PC-9 (cell line): ENCODE measurements at regions of chr1 and their contacts with region 1.

Region 1: DNA sequence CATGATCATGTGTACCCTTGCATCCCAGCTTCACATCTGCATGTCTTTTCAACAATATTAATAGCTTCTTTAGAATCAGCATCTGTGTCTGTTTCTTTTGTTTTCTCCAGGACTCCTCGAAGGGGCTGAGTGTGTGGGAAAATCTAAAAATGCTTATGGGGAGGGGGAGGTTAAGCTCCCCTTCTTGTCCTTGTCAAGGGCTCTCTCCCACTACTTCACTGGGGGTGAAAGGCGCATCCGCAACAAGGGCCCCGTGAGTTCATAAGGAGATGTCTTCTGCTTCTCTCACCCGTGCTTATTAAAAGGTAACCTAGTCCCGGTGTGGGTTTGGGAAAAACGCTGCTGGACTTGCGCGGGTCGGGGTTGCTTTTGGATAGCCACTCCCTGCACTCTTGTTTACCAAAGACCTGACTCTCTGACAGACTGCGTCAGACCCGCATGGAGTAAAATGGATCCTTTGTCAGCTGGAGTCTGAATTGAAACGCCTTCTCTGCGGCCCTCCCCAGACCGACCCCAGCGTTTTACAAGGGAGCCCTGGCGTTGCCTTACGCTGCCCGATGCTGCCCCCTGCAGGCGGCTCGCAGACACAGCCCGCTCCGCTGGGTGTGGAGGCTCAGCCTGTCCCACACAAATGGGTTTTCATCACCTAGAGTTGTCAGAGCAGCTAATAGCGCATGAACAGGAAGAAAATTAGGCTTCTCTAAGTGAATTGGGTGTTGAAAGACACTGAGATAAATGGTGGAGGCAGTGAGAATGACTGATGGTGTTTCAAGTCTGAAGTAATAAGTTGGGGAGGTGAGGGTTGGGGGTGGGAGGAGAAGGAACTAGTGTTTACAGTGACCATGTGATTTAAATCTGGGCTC is 53.8 kb downstream of the IER5 start:
- DNase-seq: peak; percentile 84 to 88
- H3K4me3 ChIP-seq: peak overlapping the region; percentile 4; the same call in 1 of the 2 replicates
- H3K27ac ChIP-seq: peak overlapping the region; percentile 92
- H3K4me1 ChIP-seq: peaks cover 59% of the 10 kb centered on the region
- H3K27me3 ChIP-seq: no peaks in the 10 kb centered on the region
- CTCF ChIP-seq: peak; percentile 97

Region 2: DNA sequence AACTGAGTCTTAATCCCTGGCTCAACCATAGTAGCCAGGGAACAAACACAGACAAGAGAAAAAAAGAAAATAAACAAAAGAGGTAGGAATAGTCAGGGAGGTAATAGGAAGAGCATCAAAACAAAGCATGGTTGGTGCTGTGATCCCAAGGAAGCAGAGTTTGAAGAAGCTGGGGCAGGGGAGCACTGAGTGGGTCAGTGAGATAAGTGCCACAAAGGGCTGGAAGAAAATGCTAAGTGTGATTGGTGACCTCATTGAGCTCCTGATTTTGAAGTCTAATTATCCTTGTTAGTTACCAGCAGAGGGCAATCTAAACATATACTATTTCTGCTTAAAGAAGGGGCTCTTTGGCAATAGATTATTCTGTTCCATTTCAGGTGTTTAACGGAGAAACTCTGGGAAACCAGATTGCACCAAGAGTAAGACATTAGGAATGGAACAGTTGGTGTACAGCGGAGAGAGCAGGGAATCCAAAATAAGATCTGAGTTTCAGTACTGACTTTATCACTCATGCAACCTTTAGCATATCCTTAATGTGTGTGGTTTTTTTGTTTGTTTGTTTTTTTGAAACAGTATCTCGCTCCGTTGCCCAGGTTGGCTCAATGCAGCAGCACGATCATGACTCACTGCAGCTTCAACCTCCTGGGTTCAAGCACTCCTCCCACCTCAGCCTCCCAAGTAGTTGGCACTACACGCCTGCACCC is 260.4 kb before region 1 on chr1:
- CTCF ChIA-PET with region 1: interaction called, 11 read pairs
- POLR2A ChIA-PET with region 1: no interaction called
- intact Hi-C with region 1: loop called (anchors 1 kb)
- DNase-seq: peak; percentile 1 to 53
- H3K4me3 ChIP-seq: no peak overlapping the region
- H3K27ac ChIP-seq: no peak overlapping the region
- H3K4me1 ChIP-seq: no peaks in the 10 kb centered on the region
- H3K27me3 ChIP-seq: no peaks in the 10 kb centered on the region
- CTCF ChIP-seq: peak; percentile 75

Region 3: GRCh38 chr1:181021811-181022434 is 120.4 kb before region 1 on chr1:
- CTCF ChIA-PET with region 1: interaction called, 5 read pairs
- POLR2A ChIA-PET with region 1: no interaction called
- intact Hi-C with region 1: loop called (anchors 1 kb)
- DNase-seq: peak; percentile 54 to 64
- H3K4me3 ChIP-seq: peak overlapping the region; percentile 63
- H3K27ac ChIP-seq: peak overlapping the region; percentile 62
- H3K4me1 ChIP-seq: peaks cover 18% of the 10 kb centered on the region
- H3K27me3 ChIP-seq: no peaks in the 10 kb centered on the region
- CTCF ChIP-seq: no peak

Region 4: DNA sequence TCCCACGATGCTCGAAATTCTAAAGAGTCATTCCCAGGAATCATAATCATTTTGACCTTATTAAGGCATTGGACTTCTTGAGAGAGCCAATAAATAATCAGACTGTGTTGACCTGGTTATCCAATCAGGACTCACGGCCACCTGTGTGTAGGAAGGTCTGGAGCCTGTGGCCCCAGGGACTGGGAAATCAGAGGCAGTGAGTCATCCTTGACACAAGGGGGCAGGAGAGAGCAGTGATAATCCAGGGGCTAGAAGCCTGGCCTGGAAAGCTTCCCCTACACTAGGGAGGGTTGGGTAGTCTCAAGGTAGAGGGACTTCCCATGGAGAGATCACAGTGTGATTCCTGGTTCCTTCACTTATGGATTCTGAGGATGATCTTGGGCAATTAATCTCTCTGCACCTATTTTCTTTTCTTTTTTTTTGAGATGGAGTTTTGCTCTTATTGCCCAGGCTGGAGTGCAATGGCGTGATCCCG is 103.9 kb before region 1 on chr1:
- CTCF ChIA-PET with region 1: interaction called, 7 read pairs
- POLR2A ChIA-PET with region 1: interaction called, 6 read pairs
- intact Hi-C with region 1: loop called (anchors 1 kb)
- DNase-seq: peak; percentile 60 to 62
- H3K4me3 ChIP-seq: no peak overlapping the region
- H3K27ac ChIP-seq: no peak overlapping the region
- H3K4me1 ChIP-seq: peaks cover 21% of the 10 kb centered on the region
- H3K27me3 ChIP-seq: no peaks in the 10 kb centered on the region
- CTCF ChIP-seq: peak; percentile 82

Region 5: GRCh38 chr1:181112071-181112929 is 30.0 kb before region 1 on chr1:
- CTCF ChIA-PET with region 1: interaction called, 4 read pairs
- POLR2A ChIA-PET with region 1: interaction called, 3 read pairs
- intact Hi-C with region 1: loop called (anchors 1 kb)
- DNase-seq: peak; percentile 94 to 99
- H3K4me3 ChIP-seq: peak overlapping the region; percentile 43; the same call in 1 of the 2 replicates
- H3K27ac ChIP-seq: peak overlapping the region; percentile 99
- H3K4me1 ChIP-seq: peaks cover 78% of the 10 kb centered on the region
- H3K27me3 ChIP-seq: no peaks in the 10 kb centered on the region
- CTCF ChIP-seq: no peak

Region 6: DNA sequence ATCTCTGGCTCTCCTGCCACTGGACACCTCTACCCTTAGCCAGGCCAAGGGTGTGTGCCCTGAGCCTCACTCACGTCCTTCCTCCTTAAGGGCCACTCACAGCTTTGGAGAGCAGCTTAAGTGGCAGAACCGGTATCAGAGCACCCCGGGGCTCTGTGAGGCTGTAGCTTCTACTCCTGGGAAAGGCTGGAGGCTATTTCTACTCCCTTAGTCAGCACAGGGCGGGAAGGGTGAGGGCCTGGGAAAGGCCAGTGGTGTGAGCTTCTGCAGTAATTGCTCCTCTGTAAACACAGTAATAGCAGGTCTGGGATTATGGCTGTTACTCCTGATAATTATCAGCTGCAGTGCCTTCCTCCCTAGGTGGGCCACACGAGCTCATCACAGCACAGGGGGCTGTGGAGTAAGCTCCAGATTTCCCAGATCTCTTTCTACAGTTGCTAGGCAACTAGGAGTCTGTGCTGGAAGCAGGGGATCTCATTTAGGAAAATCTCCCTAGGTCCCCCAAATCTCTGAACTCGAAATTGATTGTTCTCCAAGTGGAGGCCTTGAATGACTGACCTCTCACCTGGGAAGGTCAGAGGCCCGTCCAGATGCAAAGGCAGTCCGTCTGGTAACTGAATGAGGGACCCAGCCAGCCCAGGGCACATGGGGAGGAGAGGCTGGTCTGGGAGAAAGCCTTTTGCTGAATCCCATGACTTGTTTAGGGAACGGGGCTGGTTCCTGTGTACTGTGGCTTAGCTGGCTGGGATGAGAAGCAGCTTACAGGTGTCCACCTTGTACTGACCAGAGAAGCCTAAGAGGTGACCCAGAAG is 24.5 kb before region 1 on chr1:
- CTCF ChIA-PET with region 1: interaction called, 4 read pairs
- POLR2A ChIA-PET with region 1: interaction called, 3 read pairs
- intact Hi-C with region 1: loop called (anchors 1 kb)
- DNase-seq: peak; percentile 95 to 100
- H3K4me3 ChIP-seq: peak overlapping the region; percentile 37; the same call in 1 of the 2 replicates
- H3K27ac ChIP-seq: peak overlapping the region; percentile 99
- H3K4me1 ChIP-seq: peaks cover 95% of the 10 kb centered on the region
- H3K27me3 ChIP-seq: no peaks in the 10 kb centered on the region
- CTCF ChIP-seq: no peak

Region 7: GRCh38 chr1:181166377-181167196 is 24.3 kb after region 1 on chr1:
- CTCF ChIA-PET with region 1: interaction called, 3 read pairs
- POLR2A ChIA-PET with region 1: no interaction called
- intact Hi-C with region 1: loop called (anchors 2 kb)
- DNase-seq: peak; percentile 58 to 62
- H3K4me3 ChIP-seq: no peak overlapping the region
- H3K27ac ChIP-seq: no peak overlapping the region
- H3K4me1 ChIP-seq: no peaks in the 10 kb centered on the region
- H3K27me3 ChIP-seq: no peaks in the 10 kb centered on the region
- CTCF ChIP-seq: peak; percentile 88